ENCODE measurements at regions of chr4 and their contacts with region 1.

Region 1: DNA sequence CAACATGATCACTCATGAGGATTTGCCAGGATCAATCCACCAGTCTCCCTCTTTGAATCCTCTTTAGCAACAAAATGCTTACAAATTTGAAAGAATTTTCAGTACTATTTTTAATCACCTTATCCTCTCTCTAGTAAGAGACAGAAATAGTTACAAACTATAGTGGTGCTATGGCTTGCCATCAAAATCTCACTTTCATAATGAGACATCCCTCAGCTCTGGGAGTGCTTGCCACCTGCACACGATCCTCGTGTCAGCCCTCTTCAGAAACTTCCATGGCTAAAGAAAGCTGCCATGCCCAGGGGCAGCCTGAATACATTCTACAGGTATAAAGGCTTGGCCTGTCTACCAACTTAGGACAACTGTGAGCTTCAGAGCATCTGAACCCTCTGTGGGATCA is 5.1 kb upstream of the DHX15 start:
- DNase-seq: no peak

Region 2: DNA sequence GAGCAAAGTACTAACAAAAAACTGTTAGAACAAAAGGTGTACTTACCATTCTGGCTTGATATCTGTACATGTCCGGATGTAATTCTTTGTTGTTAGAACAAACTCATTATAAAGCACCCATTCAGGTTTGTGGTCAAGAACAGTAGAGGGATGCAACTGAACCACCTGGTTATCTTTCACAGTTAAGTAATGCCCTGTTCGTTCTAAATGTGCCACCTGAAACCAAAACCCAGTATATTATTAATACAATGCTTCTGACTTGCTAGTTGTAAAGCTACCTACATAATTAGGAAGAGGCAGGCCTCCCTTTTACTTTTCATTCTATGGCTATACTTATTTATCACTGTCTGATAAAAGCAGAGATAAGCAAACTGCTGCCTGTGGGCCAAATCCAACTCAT is 59.9 kb before region 1 on chr4:
- intact Hi-C with region 1: no loop called
- DNase-seq: no peak

Region 3: DNA sequence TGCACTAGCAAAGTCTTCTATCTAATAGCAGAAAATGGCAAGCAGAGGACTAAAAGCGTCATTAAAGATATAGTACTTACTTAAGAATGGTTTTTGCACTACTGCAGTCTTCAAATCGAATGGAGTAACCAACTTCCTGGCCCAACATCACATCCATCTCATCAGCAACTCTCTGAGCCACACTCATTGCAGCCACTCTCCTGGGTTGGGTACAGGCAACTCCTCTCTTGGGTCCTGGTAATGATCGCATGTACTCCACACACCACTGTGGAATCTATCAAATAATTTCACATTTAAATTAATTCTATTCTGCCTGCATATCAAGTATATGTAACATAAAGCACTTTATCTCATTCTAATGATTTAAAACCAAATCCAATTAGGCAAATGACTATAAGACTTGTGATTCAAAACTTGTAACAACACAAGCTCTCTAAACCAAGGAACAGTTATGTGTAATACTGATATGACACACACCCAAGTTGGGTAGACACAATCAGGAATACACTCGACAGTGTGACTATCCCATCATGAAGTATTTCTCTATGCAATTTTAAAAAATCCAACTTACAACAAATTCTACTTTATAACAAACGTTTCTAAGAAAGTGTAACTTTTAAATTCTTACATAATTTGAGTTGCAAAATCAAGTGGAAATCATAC is 18.7 kb before region 1 on chr4:
- intact Hi-C with region 1: no loop called
- DNase-seq: no peak

Region 4: GRCh38 chr4:24849756-24850155 is 260.3 kb after region 1 on chr4:
- intact Hi-C with region 1: loop called (anchors 5 kb)
- DNase-seq: no peak